Left cardiac atrium (tissue), 4 donors: ENCODE measurements at regions of chr1 and their contacts with region 1.

Region 1: GRCh38 chr1:27203946-27204345 is 30.5 kb upstream of the WDTC1 start:
- DNase-seq: no peak
- ATAC-seq: no peak

Region 2: GRCh38 chr1:26853156-26853555 is 350.8 kb before region 1 on chr1:
- intact Hi-C with region 1: no loop called
- DNase-seq: peak; percentile 90
- ATAC-seq: peak; percentile 83 to 89

Region 3: DNA sequence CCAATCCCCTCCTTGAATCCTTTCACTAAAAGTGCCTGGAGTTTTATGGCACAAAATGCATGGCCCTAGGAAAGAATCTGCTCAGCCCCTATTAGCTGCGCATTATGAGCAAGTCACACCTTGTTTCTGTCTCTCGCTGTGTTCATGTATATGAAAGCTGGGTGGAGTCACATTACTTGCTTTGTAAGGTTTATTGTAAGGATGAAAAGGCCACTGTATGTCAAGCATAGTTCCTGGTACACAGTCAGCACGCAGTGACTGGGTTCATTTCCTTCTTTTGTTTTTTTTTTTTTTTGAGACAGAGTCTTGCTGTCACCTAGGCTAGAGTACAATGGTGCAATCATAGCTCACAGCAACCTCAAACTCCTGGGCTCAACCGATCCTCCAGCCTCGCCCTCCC is 42.4 kb before region 1 on chr1:
- intact Hi-C with region 1: loop called in 1 of 2 experiments (anchors 5 kb)
- DNase-seq: no peak
- ATAC-seq: no peak

Region 4: DNA sequence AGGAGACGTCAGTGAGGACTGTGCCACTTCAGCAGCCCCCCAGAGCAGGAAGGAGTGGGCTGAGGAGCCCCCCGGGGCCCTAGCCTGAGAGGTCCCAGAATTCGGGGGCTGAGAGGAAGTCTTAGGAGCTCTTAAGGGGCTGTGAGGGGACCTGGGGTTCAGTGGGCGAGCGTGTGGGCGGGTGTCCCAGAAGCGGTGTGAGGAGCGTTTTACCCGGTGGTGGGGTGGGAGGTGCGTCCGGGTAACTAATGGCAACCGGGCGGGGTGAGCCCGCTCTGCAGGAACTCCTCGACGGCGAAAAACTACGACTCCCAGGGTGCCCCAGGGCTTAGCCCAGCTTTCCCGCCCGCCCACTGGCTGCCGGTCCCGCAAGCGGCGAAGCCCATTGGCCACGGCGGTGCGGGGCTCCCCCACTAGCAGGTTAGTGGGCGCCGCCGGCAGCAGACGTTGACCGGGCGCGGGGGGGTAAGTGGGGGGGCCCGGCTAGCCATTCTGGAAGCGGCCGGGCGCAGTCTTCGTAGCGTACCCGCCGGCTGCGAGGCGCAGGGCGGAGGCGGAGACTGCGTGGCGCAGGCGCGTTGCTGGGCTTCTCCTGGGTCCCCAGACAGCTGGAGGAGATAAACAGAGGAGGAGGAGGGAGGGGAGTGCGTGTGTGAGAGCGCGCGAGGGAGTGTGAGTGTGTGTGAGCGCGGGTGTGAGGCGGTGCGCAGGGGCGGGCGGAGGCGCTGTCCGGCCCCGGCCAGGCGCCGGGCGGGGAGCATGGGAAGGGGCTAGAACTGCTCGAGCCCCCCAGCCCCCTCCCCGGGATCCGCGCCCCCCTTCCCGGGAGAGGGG is 30.3 kb after region 1 on chr1 and contains the start of gene WDTC1:
- intact Hi-C with region 1: no loop called
- DNase-seq: peak; percentile 99
- ATAC-seq: peak; percentile 97 to 98
- total RNA-seq, gene WDTC1: 50.6 to 54.2 TPM